Vagina (tissue), 2 donors: ENCODE measurements at regions of chr17 and their contacts with region 1.

Region 1: GRCh38 chr17:80970044-80970761 is 21.4 kb upstream of the CHMP6 start:
- DNase-seq: no peak
- H3K4me3 ChIP-seq: no peak overlapping the region
- H3K27ac ChIP-seq: no peak overlapping the region
- H3K4me1 ChIP-seq: peaks cover 20% of the 10 kb centered on the region
- H3K27me3 ChIP-seq: no peaks in the 10 kb centered on the region
- CTCF ChIP-seq: peak in 2 of 3 experiments; percentile 7 to 29
- POLR2A ChIP-seq: no peak

Region 2: DNA sequence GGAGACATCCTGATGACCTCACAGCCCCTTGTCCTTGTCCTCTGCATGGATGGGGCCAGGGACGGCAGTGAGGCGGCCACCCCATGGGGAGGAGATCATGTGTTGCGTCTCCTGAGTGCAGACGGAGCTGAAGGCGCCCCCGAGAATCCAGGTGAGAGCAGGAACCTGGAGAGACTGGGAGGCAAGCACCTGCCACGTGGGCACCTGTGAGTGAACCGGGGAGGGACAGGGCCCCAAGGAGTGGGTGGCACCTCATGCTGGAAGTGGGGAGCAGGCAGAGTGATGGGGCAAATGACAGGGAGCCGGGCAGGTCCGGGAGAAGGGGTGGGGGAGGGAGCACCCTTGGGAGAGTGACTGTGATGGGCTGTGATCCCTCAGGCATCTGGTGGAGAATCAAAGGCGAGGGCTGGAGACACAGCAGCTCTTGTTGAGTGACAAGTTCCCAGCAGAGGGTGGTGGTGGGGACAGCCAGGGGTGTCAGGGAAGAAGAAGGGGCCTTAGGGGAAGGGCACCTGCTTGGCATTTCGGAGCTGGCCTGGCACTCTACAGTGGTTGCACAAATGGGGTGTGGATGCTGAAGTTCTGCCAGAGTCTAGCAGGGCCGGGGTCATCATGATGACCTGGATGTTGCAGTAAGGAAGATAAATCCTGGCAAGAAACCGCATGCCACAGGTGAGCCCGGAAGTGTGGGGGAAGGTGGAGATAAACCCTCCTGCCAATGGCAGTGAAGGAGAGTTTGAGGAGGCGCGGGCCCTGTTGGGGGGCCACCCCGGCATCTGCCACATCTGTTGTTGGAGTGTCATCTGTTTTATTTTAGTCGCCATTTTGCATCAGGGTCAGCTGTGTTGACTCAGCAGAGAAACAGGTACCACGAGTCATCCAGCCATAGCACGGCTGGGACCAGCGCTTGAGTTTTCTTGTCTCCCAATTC is 152.6 kb before region 1 on chr17:
- intact Hi-C with region 1: no loop called
- DNase-seq: no peak
- H3K4me3 ChIP-seq: no peak overlapping the region
- H3K27ac ChIP-seq: no peak overlapping the region
- H3K4me1 ChIP-seq: no peaks in the 10 kb centered on the region
- H3K27me3 ChIP-seq: no peaks in the 10 kb centered on the region
- CTCF ChIP-seq: no peak
- POLR2A ChIP-seq: no peak

Region 3: GRCh38 chr17:80876950-80877728 is 93.1 kb before region 1 on chr17:
- intact Hi-C with region 1: loop called (anchors 10 kb)
- DNase-seq: no peak
- H3K4me3 ChIP-seq: no peak overlapping the region
- H3K27ac ChIP-seq: no peak overlapping the region
- H3K4me1 ChIP-seq: no peaks in the 10 kb centered on the region
- H3K27me3 ChIP-seq: no peaks in the 10 kb centered on the region
- CTCF ChIP-seq: no peak
- POLR2A ChIP-seq: no peak

Region 4: GRCh38 chr17:81018044-81018802 is 48.0 kb after region 1 on chr17:
- intact Hi-C with region 1: no loop called
- DNase-seq: no peak
- H3K4me3 ChIP-seq: peak overlapping the region; percentile 32 to 33
- H3K27ac ChIP-seq: peak overlapping the region; percentile 83
- H3K4me1 ChIP-seq: peaks cover 44% of the 10 kb centered on the region
- H3K27me3 ChIP-seq: no peaks in the 10 kb centered on the region
- CTCF ChIP-seq: no peak
- POLR2A ChIP-seq: no peak